AG04449 (cell line): ENCODE measurements at regions of chr7 and their contacts with region 1.

Region 1: GRCh38 chr7:155796381-155797261 is 15.6 kb downstream of the SHH start:
- DNase-seq: no peak
- H3K4me3 ChIP-seq: no peak overlapping the region
- CTCF ChIP-seq: peak; percentile 98

Region 2: DNA sequence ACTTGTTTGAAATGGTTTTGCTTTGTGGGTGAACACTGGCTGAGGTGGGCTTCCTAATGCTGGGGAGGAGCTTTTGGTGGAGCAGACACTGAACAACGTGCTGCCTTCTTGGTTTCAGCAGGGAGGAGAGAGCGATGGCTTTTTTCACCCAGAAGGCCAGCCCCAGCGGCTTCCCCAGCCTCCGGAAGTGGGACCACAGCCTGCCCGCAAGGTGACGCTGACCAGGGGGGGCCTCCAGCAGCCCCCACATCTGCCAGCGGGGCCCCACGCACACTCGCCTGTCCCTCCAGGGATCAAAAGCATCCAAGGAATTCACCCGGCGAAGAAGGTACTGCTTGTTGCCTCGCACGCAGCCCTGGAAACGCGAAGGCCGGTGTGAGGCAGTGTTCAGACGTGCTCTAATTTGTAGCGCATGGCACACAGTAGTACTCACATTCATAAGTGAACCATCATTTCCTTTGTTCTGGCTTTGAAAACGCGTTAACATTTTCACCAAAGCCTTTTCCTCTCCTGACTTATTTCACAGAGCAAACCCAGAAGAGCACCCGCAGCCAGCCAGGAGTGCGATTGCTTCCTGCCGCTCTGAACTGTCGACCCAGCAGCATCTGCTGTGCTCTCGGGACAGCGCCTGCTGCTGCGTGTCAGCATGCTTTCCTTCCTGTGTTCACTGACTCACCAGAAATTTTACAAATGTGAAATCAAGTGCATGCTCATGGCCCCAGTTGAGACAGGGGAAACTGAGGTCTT is 32.8 kb before region 1 on chr7:
- CTCF ChIA-PET with region 1: no interaction called
- POLR2A ChIA-PET with region 1: no interaction called
- DNase-seq: peak; percentile 34
- H3K4me3 ChIP-seq: peak overlapping the region; percentile 2; the same call in 1 of the 2 replicates
- CTCF ChIP-seq: no peak

Region 3: GRCh38 chr7:156435486-156436231 is 639.0 kb after region 1 on chr7:
- CTCF ChIA-PET with region 1: no interaction called
- POLR2A ChIA-PET with region 1: no interaction called
- DNase-seq: no peak
- H3K4me3 ChIP-seq: no peak overlapping the region
- CTCF ChIP-seq: no peak

Region 4: GRCh38 chr7:156827587-156828203 is 1031.1 kb after region 1 on chr7:
- CTCF ChIA-PET with region 1: interaction called, 73 read pairs
- POLR2A ChIA-PET with region 1: no interaction called
- DNase-seq: peak; percentile 7
- H3K4me3 ChIP-seq: no peak overlapping the region
- CTCF ChIP-seq: peak; percentile 29